ENCODE measurements at regions of chr16 and their contacts with region 1.

Region 1: GRCh38 chr16:71358464-71358998 is at the start of gene CALB2:
- DNase-seq: peak; percentile 64 to 92 (median 88)
- ATAC-seq: peak; percentile 88 to 89
- H3K4me3 ChIP-seq: no peak within 1 kb of the TSS
- H3K27ac ChIP-seq: no peak within 1 kb of the TSS
- H3K4me1 ChIP-seq: no peaks in the 10 kb centered on the region
- H3K27me3 ChIP-seq: no peaks in the 10 kb centered on the region
- total RNA-seq, gene CALB2: 1.7 to 3.3 (median 2.6) TPM

Region 2: GRCh38 chr16:70800781-70801530 is 557.6 kb before region 1 on chr16 and contains the start of gene VAC14:
- intact Hi-C with region 1: loop called in 1 of 4 experiments (anchors 10 kb)
- DNase-seq: peak; percentile 89 to 96 (median 95)
- ATAC-seq: peak; percentile 98
- H3K4me3 ChIP-seq: peak within 1 kb of the TSS; percentile 99
- H3K27ac ChIP-seq: no peak within 1 kb of the TSS
- H3K4me1 ChIP-seq: peaks cover 4% of the 10 kb centered on the region
- H3K27me3 ChIP-seq: no peaks in the 10 kb centered on the region
- total RNA-seq, gene VAC14: 18.2 to 24.2 (median 23.0) TPM

Region 3: DNA sequence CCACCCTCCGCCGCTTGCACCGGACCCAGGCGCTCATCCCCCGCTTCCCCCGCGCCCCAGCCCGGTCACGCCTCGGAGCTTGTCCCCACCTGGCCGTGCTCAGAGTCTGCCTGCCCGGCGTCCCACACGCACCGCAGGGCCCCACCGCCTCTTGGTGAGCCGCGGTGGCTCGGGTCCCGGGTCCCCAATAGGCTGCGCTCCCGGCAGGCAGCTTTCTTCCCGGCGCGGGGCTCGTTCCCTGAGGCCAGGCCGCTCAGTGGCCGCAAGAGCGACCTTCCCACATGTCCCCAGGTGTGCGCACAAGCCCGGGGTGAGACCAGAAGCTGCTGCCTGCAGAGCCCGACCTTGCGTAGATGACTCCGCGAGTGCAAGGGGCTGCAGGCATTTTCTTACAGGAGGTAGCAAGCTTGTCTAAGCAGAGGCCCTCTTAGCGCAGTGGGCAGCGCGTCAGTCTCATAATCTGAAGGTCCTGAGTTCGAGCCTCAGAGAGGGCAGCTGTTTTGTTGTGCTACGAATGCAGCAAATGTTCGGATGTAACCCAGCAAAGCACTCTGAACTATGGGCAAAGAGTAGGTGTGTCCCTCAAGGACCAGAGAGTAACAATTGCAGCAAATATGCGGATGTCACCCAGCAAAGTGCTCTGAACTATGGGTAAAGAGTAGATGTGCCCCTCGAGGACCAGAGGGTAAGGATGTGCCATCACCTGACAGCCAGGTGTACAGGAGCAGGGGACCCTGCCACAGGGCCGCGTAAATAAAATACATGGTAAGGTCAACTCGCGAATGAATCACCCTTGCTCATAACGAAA is 67.7 kb after region 1 on chr16:
- intact Hi-C with region 1: no loop called
- DNase-seq: peak in 1 of 3 donors; percentile 51
- ATAC-seq: peak in 1 of 2 donors; percentile 39
- H3K4me3 ChIP-seq: no peak overlapping the region
- H3K27ac ChIP-seq: no peak overlapping the region
- H3K4me1 ChIP-seq: no peaks in the 10 kb centered on the region
- H3K27me3 ChIP-seq: no peaks in the 10 kb centered on the region

Region 4: GRCh38 chr16:71576971-71577370 is 218.4 kb after region 1 on chr16 and contains the start of gene TAT:
- intact Hi-C with region 1: no loop called
- DNase-seq: no peak
- ATAC-seq: no peak
- H3K4me3 ChIP-seq: no peak within 1 kb of the TSS
- H3K27ac ChIP-seq: no peak within 1 kb of the TSS
- H3K4me1 ChIP-seq: no peaks in the 10 kb centered on the region
- H3K27me3 ChIP-seq: no peaks in the 10 kb centered on the region
- total RNA-seq, gene TAT: 0.08 TPM in 1 of 4 donors, not detected in the others